Activated CD4-positive, alpha-beta T cell treated with anti-CD3 and anti-CD28 coated beads for 36 hours (primary cell): ENCODE measurements at regions of chr20 and their contacts with region 1.

Region 1: DNA sequence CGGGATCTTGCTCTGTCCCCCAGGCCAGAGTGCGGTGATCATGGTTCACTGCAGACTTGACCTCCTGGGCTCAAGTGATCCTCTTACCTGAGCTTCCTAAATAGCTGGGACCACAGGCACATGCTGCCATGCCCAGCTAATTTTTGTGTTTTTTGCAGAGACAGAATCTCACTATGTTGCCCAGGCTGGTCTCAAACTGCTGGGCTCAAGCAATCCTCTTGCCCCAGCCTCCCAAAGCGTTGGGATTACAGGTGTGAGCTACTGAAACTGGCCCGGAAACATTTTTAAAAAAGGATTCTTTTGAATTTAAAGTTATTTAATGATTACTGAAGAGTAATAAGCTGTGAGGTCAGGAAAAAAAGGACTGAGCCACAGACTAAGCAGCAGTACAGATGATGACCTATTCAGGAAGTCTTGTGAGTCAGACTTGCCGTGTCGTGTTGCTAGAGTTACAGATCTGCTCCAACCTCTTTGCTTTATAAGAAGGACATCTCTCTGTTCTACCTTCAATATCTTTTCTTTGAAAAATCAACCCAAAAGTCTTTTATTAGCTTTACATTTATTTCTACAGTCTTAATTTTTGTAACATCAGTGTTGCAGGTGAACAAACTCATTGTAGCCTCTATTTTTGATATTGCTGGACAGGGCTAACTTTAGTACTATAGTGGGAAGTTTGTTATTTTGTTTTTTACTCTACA is 108.7 kb downstream of the NCOA3 start:
- DNase-seq: peak; percentile 93
- ATAC-seq: peak; percentile 90
- H3K4me3 Mint-ChIP-seq: peak overlapping the region; percentile 46
- H3K27ac Mint-ChIP-seq: peak overlapping the region; percentile 90
- H3K4me1 Mint-ChIP-seq: peaks cover 82% of the 10 kb centered on the region
- H3K27me3 Mint-ChIP-seq: no peaks in the 10 kb centered on the region

Region 2: DNA sequence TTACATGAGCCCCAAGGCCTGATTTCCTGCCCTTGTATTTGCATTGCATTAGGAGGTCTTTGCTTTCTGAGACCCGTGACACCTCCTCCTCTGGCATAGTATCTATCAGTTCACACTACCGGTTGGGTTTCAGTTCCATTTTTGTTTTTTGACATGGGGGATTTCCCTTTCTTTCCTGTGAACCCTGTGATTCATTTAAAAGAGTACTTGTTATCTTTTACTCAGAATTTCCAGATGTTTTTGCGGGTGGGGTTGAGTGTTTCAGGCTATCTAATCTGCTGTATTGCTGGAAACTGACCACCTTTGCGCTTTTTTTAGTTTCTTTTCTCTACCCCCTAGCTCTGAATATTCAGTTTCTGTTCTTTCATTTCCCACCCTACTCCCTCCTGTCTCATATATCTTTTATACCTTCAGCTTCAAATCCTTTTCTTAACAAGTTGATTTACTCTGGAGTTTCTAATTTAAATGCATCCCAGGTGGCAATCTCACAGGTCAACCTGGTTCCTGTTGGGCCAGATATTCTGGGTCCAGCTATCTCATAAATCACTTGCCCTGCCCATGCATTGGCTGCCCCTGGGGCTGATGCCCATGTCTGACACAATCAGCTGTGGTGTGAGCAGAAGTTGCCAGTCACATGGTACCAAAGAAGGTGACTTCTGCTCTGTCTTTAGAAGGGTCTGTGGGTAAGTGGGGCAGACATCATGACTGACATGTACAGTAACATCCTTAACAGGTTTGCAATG is 123.0 kb before region 1 on chr20:
- CTCF ChIA-PET with region 1: interaction called, 8 read pairs
- POLR2A ChIA-PET with region 1: interaction called, 4 read pairs
- intact Hi-C with region 1: loop called in 1 of 2 experiments (anchors 1 kb)
- DNase-seq: peak; percentile 78
- ATAC-seq: peak; percentile 88
- H3K4me3 Mint-ChIP-seq: peak overlapping the region; percentile 26
- H3K27ac Mint-ChIP-seq: peak overlapping the region; percentile 99
- H3K4me1 Mint-ChIP-seq: peaks cover 80% of the 10 kb centered on the region
- H3K27me3 Mint-ChIP-seq: no peaks in the 10 kb centered on the region

Region 3: DNA sequence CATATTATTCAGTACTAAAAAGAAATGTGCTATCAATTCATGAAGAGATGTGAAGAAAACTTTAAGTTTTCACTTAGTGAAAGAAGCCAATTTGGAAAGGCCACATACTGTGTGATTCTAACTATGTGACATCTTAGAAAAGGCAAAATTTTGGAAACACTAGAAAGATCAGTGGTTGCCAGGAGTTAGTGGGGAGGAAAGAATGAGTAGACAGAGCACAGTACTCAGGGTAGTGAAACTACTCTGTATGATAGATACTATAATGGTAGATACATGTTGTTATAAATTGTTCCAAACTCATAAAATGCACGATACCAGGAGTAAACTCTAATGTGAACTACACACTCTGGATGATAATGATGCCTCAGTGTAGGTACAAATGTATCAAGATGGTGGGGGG is 94.6 kb before region 1 on chr20:
- CTCF ChIA-PET with region 1: interaction called, 3 read pairs
- POLR2A ChIA-PET with region 1: no interaction called
- intact Hi-C with region 1: loop called in 1 of 2 experiments (anchors 1 kb)
- DNase-seq: no peak
- ATAC-seq: peak; percentile 88
- H3K4me3 Mint-ChIP-seq: peak overlapping the region; percentile 5
- H3K27ac Mint-ChIP-seq: peak overlapping the region; percentile 89
- H3K4me1 Mint-ChIP-seq: peaks cover 65% of the 10 kb centered on the region
- H3K27me3 Mint-ChIP-seq: no peaks in the 10 kb centered on the region

Region 4: DNA sequence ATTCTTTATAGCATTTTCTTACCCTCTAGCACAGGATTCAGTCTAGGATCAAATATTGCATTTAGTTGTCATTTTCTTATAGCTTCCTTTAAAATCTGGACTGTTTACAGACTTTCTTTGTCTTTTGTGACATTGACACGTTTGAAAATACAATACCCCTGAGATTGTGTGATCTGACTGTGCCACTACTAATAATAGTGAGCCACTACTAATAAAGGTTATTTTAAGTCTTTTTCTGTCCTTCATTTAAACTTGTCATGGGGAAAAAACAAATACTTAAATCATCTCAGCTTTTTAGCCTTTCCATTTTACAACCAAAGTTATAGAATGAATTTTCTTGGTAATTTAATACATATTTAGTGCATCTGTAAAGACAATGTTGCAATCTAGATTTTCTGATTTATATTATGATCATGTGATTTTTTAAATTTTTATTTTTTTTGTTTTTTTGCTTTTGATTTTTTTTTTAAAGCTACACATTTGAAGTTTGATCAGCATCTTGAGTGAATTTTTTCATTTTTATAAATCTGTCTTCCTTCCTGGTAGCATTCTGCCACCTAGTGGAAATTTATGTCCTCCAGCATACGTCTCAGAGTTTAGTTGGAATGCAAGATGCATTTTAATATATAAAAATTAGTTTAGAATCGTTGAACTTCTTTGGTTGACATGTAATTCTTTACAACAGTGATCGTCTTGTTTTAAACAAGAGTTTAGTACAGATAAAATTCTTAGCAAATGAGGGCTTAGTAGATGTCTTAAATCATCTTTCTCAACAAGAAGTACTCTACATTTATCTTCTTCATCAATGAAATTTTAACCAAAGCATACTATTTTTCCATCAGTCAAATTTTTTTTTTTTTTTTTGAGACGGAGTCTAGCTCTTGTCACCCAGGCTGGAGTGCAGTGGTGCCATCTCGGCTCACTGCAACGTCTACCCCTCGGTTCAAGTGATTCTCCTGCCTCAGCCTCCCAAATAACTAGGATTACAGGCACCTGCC is 10.7 kb after region 1 on chr20:
- CTCF ChIA-PET with region 1: interaction called, 58 read pairs
- POLR2A ChIA-PET with region 1: no interaction called
- intact Hi-C with region 1: no loop called
- DNase-seq: no peak
- ATAC-seq: peak; percentile 61
- H3K4me3 Mint-ChIP-seq: no peak overlapping the region
- H3K27ac Mint-ChIP-seq: peak overlapping the region; percentile 79
- H3K4me1 Mint-ChIP-seq: peaks cover 33% of the 10 kb centered on the region
- H3K27me3 Mint-ChIP-seq: no peaks in the 10 kb centered on the region

Region 5: GRCh38 chr20:48760403-48760983 is 1150.1 kb after region 1 on chr20:
- CTCF ChIA-PET with region 1: no interaction called
- POLR2A ChIA-PET with region 1: no interaction called
- intact Hi-C with region 1: loop called in 1 of 2 experiments (anchors 10 kb)
- DNase-seq: peak; percentile 78
- ATAC-seq: peak; percentile 87
- H3K4me3 Mint-ChIP-seq: peak overlapping the region; percentile 34
- H3K27ac Mint-ChIP-seq: peak overlapping the region; percentile 96
- H3K4me1 Mint-ChIP-seq: peaks cover 67% of the 10 kb centered on the region
- H3K27me3 Mint-ChIP-seq: no peaks in the 10 kb centered on the region